ENCODE measurements at regions of chr6 and their contacts with region 1.

Region 1: GRCh38 chr6:41072676-41073623 is at the start of gene NFYA:
- DNase-seq: peak; percentile 99
- H3K4me3 ChIP-seq: peak within 1 kb of the TSS; percentile 90 to 92 (median 91)
- H3K27ac ChIP-seq: peak within 1 kb of the TSS; percentile 93
- H3K4me1 ChIP-seq: peaks cover 28% of the 10 kb centered on the region
- H3K27me3 ChIP-seq: no peaks in the 10 kb centered on the region
- CTCF ChIP-seq: peak in 1 of 2 donors; percentile 25
- total RNA-seq, gene NFYA: 18.5 to 29.1 TPM

Region 2: GRCh38 chr6:39622690-39623089 is 1450.3 kb before region 1 on chr6:
- CTCF ChIA-PET with region 1: no interaction called
- dilution Hi-C with region 1: no loop called
- in situ Hi-C with region 1: no loop called
- intact Hi-C with region 1: no loop called
- DNase-seq: no peak
- H3K4me3 ChIP-seq: no peak overlapping the region
- H3K27ac ChIP-seq: no peak overlapping the region
- H3K4me1 ChIP-seq: no peaks in the 10 kb centered on the region
- H3K27me3 ChIP-seq: peaks cover 3% of the 10 kb centered on the region
- CTCF ChIP-seq: no peak

Region 3: DNA sequence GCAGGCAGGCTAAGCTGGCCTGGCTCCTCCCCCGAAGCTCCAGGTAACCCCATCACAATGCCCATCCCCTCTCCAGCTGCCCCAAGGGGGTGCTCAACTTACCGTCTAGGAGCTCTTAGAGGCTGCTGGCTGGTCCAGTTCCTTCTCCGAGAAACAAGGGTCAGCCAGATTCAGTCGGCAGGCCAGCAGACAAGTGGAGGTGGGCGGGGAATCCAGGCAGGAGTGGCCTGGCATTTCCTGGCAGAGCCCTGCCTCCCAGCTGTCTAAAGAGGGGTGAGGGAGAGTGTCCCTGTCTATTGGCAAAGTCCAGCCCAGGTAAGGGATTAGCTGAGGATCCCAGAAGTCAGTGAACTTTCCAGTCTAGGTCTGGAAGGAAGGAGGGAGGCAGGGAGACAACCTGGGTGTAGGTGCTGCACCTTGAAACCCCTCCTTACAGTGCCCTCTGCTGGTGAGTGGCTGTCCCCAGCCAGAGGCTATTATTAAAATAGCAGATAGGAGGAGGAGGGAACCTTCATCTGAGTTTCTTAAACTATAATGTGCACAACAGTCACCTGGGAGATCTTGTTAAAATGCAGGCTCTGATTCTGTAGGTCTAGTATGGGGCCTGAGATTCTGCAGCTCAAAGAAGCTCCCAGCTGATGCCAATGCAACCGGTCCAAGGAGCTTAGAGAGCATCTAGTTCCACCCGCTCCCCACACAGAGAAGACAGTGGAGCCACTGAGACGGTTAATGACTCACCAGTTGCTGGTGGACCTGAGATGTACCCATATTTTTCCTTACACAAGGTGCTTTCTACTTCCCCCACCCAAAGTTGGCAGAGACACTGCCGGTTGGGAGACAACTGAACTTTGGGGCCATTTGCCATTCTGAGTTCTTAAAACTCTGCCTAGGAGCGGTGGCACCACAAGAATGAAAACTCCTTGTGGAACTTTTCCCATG is 33.6 kb before region 1 on chr6 and contains the start of gene UNC5CL:
- CTCF ChIA-PET with region 1: no interaction called
- dilution Hi-C with region 1: no loop called
- in situ Hi-C with region 1: no loop called
- intact Hi-C with region 1: loop called (anchors 2 kb)
- DNase-seq: peak; percentile 57
- H3K4me3 ChIP-seq: no peak within 1 kb of the TSS
- H3K27ac ChIP-seq: no peak within 1 kb of the TSS
- H3K4me1 ChIP-seq: peaks cover 43% of the 10 kb centered on the region
- H3K27me3 ChIP-seq: no peaks in the 10 kb centered on the region
- CTCF ChIP-seq: peak; percentile 87 to 93
- total RNA-seq, gene UNC5CL: 0.50 to 0.54 TPM

Region 4: DNA sequence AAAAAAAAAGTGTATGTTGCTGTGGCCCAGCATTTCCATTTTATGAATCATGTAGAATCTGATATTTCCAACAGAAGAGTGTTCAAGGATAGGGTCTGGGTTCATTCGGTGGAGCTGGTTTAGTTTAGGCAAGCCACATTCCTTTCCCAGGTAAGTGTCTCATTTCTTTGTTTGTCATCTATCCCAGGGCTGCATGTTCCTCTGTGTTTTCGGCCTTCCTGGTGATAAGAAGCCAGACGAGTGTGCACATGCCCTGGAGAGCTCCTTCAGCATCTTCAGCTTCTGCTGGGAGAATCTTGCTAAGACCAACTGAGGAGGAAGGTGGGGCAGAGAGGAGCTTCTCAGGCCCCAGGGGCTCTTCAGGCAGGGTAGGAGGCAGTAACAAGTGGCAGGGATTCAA is 38.1 kb after region 1 on chr6:
- CTCF ChIA-PET with region 1: no interaction called
- dilution Hi-C with region 1: no loop called
- in situ Hi-C with region 1: no loop called
- intact Hi-C with region 1: no loop called
- DNase-seq: peak; percentile 87
- H3K4me3 ChIP-seq: no peak overlapping the region
- H3K27ac ChIP-seq: no peak overlapping the region
- H3K4me1 ChIP-seq: peaks cover 10% of the 10 kb centered on the region
- H3K27me3 ChIP-seq: no peaks in the 10 kb centered on the region
- CTCF ChIP-seq: no peak

Region 5: DNA sequence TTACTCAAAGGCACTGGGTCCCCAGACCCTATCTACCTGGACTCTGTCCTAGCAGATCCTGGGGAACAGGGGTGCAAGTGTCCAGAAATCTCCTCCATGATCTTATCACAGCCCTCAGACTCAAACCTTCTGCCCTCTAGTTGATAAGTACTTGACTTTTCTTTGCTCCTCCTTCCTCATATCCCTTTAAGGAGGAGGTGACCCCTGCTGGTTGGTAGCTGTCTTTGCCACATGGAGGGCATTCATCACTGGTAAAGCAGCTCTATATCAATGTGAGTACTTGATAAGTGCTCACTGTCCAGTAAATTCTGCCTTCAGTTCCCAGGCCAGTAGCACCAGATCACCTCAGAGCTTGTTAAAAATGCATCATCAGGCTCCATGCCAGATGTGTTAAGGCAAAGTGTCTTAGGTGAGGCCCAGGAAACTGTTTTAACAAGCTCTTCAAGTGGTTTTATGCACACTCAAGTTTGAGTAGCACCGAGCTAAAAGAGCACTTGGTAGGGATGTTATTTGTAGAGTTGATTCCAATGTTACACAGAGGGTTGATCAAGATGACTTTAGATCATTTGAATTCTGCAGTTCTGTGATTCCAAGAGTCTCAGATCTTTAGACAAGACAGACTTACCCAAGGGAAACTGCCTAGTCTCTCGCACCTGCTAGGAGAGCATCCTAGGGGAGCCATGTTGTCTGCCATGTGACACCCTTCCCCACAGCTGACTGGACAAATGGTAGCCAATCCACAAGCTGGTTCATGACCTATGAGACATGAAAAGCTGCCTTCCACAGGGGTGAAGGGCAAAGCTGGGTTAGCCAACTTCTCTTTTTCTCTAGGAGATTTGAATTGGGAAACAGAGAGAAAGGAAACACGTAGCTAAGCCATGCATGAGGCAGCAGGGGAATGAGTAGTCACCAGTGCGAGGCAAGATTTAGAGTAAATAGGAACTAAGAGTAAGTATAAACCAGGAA is 109.4 kb after region 1 on chr6:
- CTCF ChIA-PET with region 1: no interaction called
- dilution Hi-C with region 1: no loop called
- in situ Hi-C with region 1: no loop called
- intact Hi-C with region 1: loop called (anchors 1 kb)
- DNase-seq: peak; percentile 70
- H3K4me3 ChIP-seq: no peak overlapping the region
- H3K27ac ChIP-seq: no peak overlapping the region
- H3K4me1 ChIP-seq: peaks cover 12% of the 10 kb centered on the region
- H3K27me3 ChIP-seq: no peaks in the 10 kb centered on the region
- CTCF ChIP-seq: peak; percentile 90 to 97

Region 6: GRCh38 chr6:41439524-41440418 is 366.8 kb after region 1 on chr6:
- CTCF ChIA-PET with region 1: no interaction called
- dilution Hi-C with region 1: no loop called
- in situ Hi-C with region 1: no loop called
- intact Hi-C with region 1: no loop called
- DNase-seq: no peak
- H3K4me3 ChIP-seq: no peak overlapping the region
- H3K27ac ChIP-seq: no peak overlapping the region
- H3K4me1 ChIP-seq: no peaks in the 10 kb centered on the region
- H3K27me3 ChIP-seq: peaks cover 8% of the 10 kb centered on the region
- CTCF ChIP-seq: no peak

Measured in mammary epithelial cell (primary cell).